ENCODE measurements at regions of chr4 and their contacts with region 1.

Region 1: DNA sequence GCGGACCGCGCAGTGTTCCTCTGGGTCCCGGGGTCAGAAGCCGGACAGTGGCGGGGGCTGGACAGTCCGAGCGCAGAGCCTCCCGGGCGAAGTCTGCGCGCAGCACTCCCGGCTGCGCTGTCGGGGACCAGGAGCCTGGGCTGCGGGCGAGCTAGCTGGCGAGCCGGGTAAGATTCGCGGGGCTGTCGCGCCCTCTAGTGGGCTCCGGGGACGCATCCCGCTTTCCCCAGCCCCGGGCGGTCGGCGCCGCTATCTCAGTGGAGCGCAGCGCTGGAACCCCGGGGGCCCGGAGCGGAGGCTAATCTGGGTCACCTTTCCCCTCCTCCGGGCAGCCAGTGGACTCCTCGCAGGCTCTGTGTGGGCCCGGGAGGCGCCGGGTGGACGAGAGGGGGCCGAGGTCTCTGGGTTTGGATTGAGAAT is 4.2 kb downstream of the PDGFRA start:
- DNase-seq: peak; percentile 54 to 90 (median 78)
- H3K4me3 ChIP-seq: peak overlapping the region; percentile 33 to 74 (median 58)
- H3K27ac ChIP-seq: peak overlapping the region in 35 of 59 donors; percentile 2 to 73 (median 49)
- H3K27me3 ChIP-seq: peaks cover 4 to 76% (median 47%) of the 10 kb centered on the region in 45 donors
- CTCF ChIP-seq: peak; percentile 71 to 94 (median 84)

Region 2: GRCh38 chr4:52545099-52546069 is 1687.9 kb before region 1 on chr4:
- intact Hi-C with region 1: loop called in 1 of 2 experiments (anchors 10 kb)
- DNase-seq: peak in 8 of 10 donors; percentile 30 to 74 (median 58)
- H3K4me3 ChIP-seq: peak overlapping the region in 7 of 59 donors; percentile 7 to 37 (median 35)
- H3K27ac ChIP-seq: no peak overlapping the region
- H3K27me3 ChIP-seq: peaks cover 0 to under 1% (median 0%) of the 10 kb centered on the region in 45 donors
- CTCF ChIP-seq: peak; percentile 33 to 93 (median 83)

Region 3: DNA sequence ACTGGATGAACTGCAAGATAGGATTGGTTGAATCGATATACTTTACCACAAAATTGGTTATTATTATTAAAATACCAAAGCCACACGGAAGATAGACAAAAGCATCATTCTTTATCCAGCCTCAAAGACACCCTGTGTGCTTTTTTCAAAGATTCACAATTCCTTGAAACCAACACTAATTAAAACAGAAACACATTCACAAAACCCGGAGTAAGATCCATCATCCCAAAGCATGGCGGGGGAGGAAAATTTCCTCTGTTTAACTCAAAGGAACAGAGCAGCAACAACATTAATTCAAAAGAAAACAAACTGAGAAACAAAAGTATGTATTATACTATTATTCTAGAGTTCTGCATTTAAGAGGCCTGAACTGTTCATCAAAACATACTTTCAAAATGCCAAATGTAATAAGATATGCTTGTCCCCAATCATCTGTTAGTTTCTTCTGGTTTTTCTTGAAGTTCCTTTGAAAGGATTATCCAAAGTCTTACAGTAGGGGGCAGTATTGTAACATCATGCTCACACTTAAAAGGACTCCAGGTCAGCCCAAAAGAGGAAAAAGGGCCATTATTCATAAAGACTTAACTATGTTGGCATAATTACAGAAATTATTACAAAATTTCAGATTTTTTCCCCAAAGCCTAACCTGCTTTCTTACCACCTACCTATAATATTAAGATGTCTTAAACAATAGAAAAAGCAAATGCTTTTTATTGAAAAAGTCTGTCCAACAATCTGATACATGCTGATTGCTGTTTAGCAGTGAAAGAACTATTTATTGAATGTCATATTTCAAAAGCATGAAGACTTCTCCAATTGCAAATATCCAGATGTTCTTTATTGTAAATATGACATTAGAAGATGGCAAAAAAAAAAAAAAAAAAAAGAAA is 1036.2 kb before region 1 on chr4:
- intact Hi-C with region 1: loop called (anchors 1 to 10 kb)
- DNase-seq: no peak
- H3K4me3 ChIP-seq: peak overlapping the region in 39 of 59 donors; percentile 1 to 57 (median 25)
- H3K27ac ChIP-seq: no peak overlapping the region
- H3K27me3 ChIP-seq: no peaks in the 10 kb centered on the region
- CTCF ChIP-seq: peak; percentile 54 to 92 (median 78)

Region 4: GRCh38 chr4:53702334-53703266 is 530.7 kb before region 1 on chr4:
- intact Hi-C with region 1: loop called (anchors 5 kb)
- DNase-seq: peak in 9 of 10 donors; percentile 19 to 62 (median 50)
- H3K4me3 ChIP-seq: peak overlapping the region in 58 of 59 donors; percentile 1 to 72 (median 46)
- H3K27ac ChIP-seq: peak overlapping the region in 30 of 59 donors; percentile 4 to 71 (median 51)
- H3K27me3 ChIP-seq: peaks cover 0 to 3% (median 0%) of the 10 kb centered on the region in 45 donors
- CTCF ChIP-seq: peak in 4 of 56 donors; percentile 6 to 31 (median 18)

Region 5: DNA sequence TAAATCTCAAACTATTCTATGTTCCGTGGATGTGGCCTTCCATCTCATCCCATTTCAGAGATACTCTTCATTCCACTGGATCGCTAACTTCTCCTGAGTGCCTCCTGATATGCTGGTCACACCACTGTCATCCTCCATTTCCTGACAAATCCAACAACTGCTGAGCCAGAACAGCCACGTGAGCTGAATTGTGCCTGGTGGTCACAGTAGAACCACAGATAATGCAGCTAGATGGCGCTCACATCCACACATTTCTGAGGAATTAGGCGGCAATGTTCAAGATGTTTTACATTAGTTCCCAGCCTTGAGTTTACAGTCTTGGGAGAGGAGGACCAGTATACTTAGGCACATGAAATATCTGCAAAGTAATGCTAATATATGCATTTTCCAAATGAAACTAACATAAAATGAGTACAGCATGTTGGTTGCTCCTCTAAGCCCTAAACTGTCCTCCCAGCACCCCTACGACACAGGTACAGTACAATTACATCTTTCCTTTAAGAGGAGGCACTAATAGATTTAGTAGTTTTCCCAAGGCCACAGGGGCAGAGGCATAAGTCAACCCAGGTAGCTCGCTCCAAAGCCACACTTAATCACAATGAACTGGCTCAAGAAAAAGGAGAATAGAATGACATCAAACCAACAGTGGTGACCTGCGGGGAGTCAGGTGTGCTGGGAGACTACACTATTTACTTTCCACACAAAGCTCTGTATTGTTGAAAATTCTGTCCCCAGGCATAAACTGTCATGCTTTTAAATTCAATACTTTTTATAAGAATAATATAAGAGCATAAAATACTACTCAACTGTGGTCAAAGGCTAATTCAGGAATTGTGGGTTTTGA is 303.1 kb before region 1 on chr4:
- intact Hi-C with region 1: loop called in 1 of 2 experiments (anchors 5 kb)
- DNase-seq: peak in 9 of 10 donors; percentile 55 to 82 (median 64)
- H3K4me3 ChIP-seq: peak overlapping the region in 14 of 59 donors; percentile 7 to 39 (median 25)
- H3K27ac ChIP-seq: no peak overlapping the region
- H3K27me3 ChIP-seq: peaks cover 0 to 8% (median 0%) of the 10 kb centered on the region in 45 donors
- CTCF ChIP-seq: peak; percentile 53 to 91 (median 82)

Region 6: GRCh38 chr4:54091637-54092404 is 141.5 kb before region 1 on chr4:
- intact Hi-C with region 1: no loop called
- DNase-seq: peak; percentile 50 to 86 (median 74)
- H3K4me3 ChIP-seq: peak overlapping the region; percentile 36 to 73 (median 57)
- H3K27ac ChIP-seq: peak overlapping the region in 22 of 59 donors; percentile 10 to 55 (median 32)
- H3K27me3 ChIP-seq: peaks cover 0 to 91% (median 37%) of the 10 kb centered on the region in 45 donors
- CTCF ChIP-seq: no peak

Region 7: GRCh38 chr4:54446581-54446980 is 213.3 kb after region 1 on chr4:
- intact Hi-C with region 1: no loop called
- DNase-seq: no peak
- H3K4me3 ChIP-seq: no peak overlapping the region
- H3K27ac ChIP-seq: peak overlapping the region in 1 of 59 donors; percentile 1
- H3K27me3 ChIP-seq: peaks cover 0 to 13% (median 0%) of the 10 kb centered on the region in 45 donors
- CTCF ChIP-seq: no peak

Measured in dorsolateral prefrontal cortex (tissue), 120 donors.